Activated T-helper 1 cell treated with anti-CD3 and anti-CD28 coated beads, Interleukin-12 subunit alpha, Interleukin-12 subunit beta, Interleukin-2, Interleukin-4 antibody, amounts not matched to agents 30 ng/mL and 10 ng/mL and 1 ng/mL, durations not matched to agents 14 hours and 24 hours and 36 hours (primary cell): ENCODE measurements at regions of chr2 and their contacts with region 1.

Region 1: GRCh38 chr2:202299712-202300111 is 34.1 kb downstream of the NOP58 start:
- DNase-seq: no peak
- H3K4me3 Mint-ChIP-seq: no peak overlapping the region
- H3K27ac Mint-ChIP-seq: peak overlapping the region; percentile 71
- H3K4me1 Mint-ChIP-seq: peaks cover 16% of the 10 kb centered on the region
- H3K27me3 Mint-ChIP-seq: no peaks in the 10 kb centered on the region

Region 2: DNA sequence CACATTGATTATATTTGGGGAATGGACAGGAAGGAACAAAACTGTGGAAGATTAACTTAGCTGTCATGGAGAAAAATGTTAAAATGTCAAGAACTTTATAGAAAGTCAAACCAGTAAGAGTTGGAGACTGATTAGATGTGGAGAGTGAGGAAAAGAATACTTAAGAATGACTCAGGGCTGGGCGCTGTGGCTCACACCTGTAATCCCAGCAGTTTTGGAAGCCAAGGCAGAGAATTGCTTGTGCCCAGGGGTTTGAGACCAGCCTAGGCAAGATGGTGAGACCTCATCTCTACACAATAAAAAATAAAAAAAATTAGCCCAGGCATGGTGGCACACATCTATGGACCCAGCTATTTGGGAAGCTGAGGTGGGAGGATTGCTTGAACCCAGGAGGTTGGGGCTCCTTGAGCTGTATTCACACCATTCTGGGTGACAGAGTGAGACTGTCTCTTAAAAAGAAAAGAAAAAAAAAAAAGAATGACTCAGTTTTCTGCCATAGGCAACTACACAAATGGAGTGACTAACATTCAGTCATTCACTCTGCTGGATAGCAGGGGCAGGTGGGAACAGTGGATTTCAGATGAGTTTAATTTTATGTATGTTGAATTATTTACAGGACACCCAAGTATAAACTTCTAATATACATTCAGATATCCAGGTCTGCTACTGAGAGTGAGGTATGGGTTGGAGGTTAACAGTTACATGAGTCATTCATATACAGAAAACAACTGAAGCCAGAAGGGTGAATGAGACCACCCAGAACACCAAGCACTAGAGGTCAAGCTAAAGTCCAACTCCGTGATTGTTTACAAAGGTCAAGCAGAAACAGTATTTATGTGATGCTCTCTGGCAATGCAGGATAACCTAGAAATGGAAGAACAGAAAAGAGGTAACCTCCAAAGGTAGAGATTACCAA is 1370.1 kb before region 1 on chr2:
- intact Hi-C with region 1: loop called (anchors 10 kb)
- DNase-seq: no peak
- H3K4me3 Mint-ChIP-seq: no peak overlapping the region
- H3K27ac Mint-ChIP-seq: peak overlapping the region; percentile 35
- H3K4me1 Mint-ChIP-seq: peaks cover 9% of the 10 kb centered on the region
- H3K27me3 Mint-ChIP-seq: no peaks in the 10 kb centered on the region

Region 3: GRCh38 chr2:201517094-201517493 is 782.6 kb before region 1 on chr2:
- intact Hi-C with region 1: no loop called
- DNase-seq: no peak
- H3K4me3 Mint-ChIP-seq: no peak overlapping the region
- H3K27ac Mint-ChIP-seq: no peak overlapping the region
- H3K4me1 Mint-ChIP-seq: no peaks in the 10 kb centered on the region
- H3K27me3 Mint-ChIP-seq: no peaks in the 10 kb centered on the region

Region 4: GRCh38 chr2:202278944-202279343 is 20.8 kb before region 1 on chr2:
- intact Hi-C with region 1: loop called (anchors 1 kb)
- DNase-seq: no peak
- H3K4me3 Mint-ChIP-seq: peak overlapping the region; percentile 7
- H3K27ac Mint-ChIP-seq: peak overlapping the region; percentile 92
- H3K4me1 Mint-ChIP-seq: peaks cover 24% of the 10 kb centered on the region
- H3K27me3 Mint-ChIP-seq: no peaks in the 10 kb centered on the region